ENCODE measurements at regions of chr1 and their contacts with region 1.

Region 1: DNA sequence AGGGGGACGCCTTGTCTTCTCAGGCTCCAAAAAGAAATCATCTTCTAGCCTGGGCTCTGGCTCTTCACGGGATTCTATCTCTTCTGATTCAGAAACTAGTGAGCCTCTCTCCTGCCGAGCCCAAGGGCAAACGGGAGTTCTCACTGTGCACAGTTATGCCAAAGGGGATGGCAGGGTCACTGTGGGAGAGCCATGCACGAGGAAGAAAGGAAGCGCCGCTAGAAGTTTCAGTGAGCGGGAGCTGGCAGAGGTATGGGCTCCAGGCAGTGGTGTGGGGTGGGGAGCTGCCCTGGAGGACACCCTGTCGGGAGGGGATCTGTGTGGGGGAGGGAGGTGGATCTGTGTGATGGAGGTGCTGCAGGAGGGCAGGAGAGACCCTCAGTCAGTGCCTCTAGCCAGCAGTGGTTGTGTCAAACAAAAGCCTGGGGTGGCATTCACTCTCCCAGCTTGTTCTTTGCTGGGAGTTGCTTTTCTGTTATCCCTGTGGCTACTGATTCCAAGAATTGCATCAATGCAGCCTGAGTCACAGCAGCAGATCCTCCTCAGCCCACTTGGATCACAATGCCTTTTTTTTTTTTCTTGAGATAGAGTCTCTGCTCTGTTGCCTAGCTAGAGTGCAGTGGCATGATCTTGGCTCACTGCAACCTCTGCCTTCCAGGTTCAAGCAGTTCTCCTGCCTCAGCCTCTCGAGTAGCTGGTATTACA is 21.8 kb downstream of the KDM4A start:
- DNase-seq: no peak
- ATAC-seq: no peak
- H3K4me3 ChIP-seq: no peak overlapping the region
- H3K4me3 Mint-ChIP-seq: no peak overlapping the region
- H3K27ac ChIP-seq: no peak overlapping the region
- H3K27ac Mint-ChIP-seq: no peak overlapping the region
- H3K4me1 ChIP-seq: no peaks in the 10 kb centered on the region
- H3K4me1 Mint-ChIP-seq: no peaks in the 10 kb centered on the region
- H3K27me3 ChIP-seq: no peaks in the 10 kb centered on the region
- H3K27me3 Mint-ChIP-seq: no peaks in the 10 kb centered on the region
- CTCF ChIP-seq: no peak

Region 2: GRCh38 chr1:43834280-43835081 is 162.7 kb after region 1 on chr1:
- CTCF ChIA-PET with region 1: no interaction called
- POLR2A ChIA-PET with region 1: interaction called, 11 read pairs
- intact Hi-C with region 1: no loop called
- DNase-seq: no peak
- ATAC-seq: no peak
- H3K4me3 ChIP-seq: no peak overlapping the region
- H3K4me3 Mint-ChIP-seq: peak overlapping the region; percentile 54
- H3K27ac ChIP-seq: peak overlapping the region; percentile 11 to 70
- H3K27ac Mint-ChIP-seq: peak overlapping the region; percentile 62
- H3K4me1 ChIP-seq: peaks cover 52 to 56% of the 10 kb centered on the region in 2 donors
- H3K4me1 Mint-ChIP-seq: peaks cover 52% of the 10 kb centered on the region
- H3K27me3 ChIP-seq: no peaks in the 10 kb centered on the region
- H3K27me3 Mint-ChIP-seq: no peaks in the 10 kb centered on the region
- CTCF ChIP-seq: no peak